HCT116 (cell line): ENCODE measurements at regions of chr12 and their contacts with region 1.

Region 1: GRCh38 chr12:69900720-69901131 is 75.7 kb downstream of the MYRFL start:
- DNase-seq: peak; percentile 45
- ATAC-seq: peak; percentile 86
- H3K4me3 ChIP-seq: no peak overlapping the region
- H3K27ac ChIP-seq: no peak overlapping the region
- H3K4me1 ChIP-seq: no peaks in the 10 kb centered on the region
- H3K27me3 ChIP-seq: no peaks in the 10 kb centered on the region
- CTCF ChIP-seq: peak; percentile 67 to 89 (median 81)
- POLR2A ChIP-seq: no peak
- RAD21 ChIP-seq: peak; percentile 97

Region 2: GRCh38 chr12:69179786-69180185 is 720.9 kb before region 1 on chr12:
- CTCF ChIA-PET with region 1: no interaction called
- POLR2A ChIA-PET with region 1: no interaction called
- RAD21 ChIA-PET with region 1: no interaction called
- intact Hi-C with region 1: no loop called
- DNase-seq: no peak
- ATAC-seq: no peak
- H3K4me3 ChIP-seq: no peak overlapping the region
- H3K27ac ChIP-seq: no peak overlapping the region
- H3K4me1 ChIP-seq: no peaks in the 10 kb centered on the region
- H3K27me3 ChIP-seq: no peaks in the 10 kb centered on the region
- CTCF ChIP-seq: no peak
- POLR2A ChIP-seq: no peak
- RAD21 ChIP-seq: no peak

Region 3: DNA sequence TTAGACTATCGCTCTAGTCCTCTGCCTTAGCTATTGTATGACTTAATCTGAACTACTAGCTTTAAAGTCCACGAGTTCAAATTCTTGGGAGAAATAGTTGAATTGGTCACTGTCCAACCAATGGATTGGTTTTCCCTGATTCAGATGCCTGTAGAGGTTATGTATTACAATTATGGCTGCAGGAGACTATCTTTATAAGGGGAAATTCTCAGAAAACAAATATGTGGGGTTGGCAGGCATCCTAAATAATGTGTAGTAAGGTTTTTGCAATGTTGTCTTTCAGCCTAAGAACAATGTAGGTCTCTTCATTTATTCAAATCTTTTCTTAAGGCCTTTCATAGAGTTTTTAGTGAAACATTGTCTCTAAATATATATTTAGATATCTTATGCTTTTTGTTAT is 48.8 kb before region 1 on chr12:
- CTCF ChIA-PET with region 1: no interaction called
- POLR2A ChIA-PET with region 1: no interaction called
- RAD21 ChIA-PET with region 1: no interaction called
- intact Hi-C with region 1: no loop called
- DNase-seq: no peak
- ATAC-seq: no peak
- H3K4me3 ChIP-seq: no peak overlapping the region
- H3K27ac ChIP-seq: no peak overlapping the region
- H3K4me1 ChIP-seq: no peaks in the 10 kb centered on the region
- H3K27me3 ChIP-seq: no peaks in the 10 kb centered on the region
- CTCF ChIP-seq: no peak
- POLR2A ChIP-seq: no peak
- RAD21 ChIP-seq: no peak

Region 4: DNA sequence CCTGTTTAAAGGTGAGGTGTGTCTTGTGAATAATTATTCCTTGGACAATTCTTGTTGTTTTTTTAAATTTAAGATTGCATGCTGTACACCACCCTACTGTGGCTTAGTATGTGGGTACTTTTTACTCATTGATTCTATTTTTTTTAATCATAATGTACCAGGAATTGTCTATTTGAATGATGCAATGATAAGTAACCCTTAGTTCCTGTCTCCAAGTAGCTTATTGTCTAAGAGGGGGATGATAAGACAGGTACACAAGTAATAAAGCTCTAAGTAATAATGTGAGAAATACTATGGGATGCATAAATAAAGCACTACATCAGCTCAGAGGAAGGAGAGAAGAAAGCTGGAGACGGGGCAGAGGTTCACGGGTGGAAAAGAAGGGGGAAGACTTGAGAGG is 15.2 kb after region 1 on chr12:
- CTCF ChIA-PET with region 1: no interaction called
- POLR2A ChIA-PET with region 1: no interaction called
- RAD21 ChIA-PET with region 1: no interaction called
- intact Hi-C with region 1: loop called (anchors 1 kb)
- DNase-seq: no peak
- ATAC-seq: no peak
- H3K4me3 ChIP-seq: no peak overlapping the region
- H3K27ac ChIP-seq: no peak overlapping the region
- H3K4me1 ChIP-seq: no peaks in the 10 kb centered on the region
- H3K27me3 ChIP-seq: no peaks in the 10 kb centered on the region
- CTCF ChIP-seq: no peak
- POLR2A ChIP-seq: no peak
- RAD21 ChIP-seq: no peak

Region 5: DNA sequence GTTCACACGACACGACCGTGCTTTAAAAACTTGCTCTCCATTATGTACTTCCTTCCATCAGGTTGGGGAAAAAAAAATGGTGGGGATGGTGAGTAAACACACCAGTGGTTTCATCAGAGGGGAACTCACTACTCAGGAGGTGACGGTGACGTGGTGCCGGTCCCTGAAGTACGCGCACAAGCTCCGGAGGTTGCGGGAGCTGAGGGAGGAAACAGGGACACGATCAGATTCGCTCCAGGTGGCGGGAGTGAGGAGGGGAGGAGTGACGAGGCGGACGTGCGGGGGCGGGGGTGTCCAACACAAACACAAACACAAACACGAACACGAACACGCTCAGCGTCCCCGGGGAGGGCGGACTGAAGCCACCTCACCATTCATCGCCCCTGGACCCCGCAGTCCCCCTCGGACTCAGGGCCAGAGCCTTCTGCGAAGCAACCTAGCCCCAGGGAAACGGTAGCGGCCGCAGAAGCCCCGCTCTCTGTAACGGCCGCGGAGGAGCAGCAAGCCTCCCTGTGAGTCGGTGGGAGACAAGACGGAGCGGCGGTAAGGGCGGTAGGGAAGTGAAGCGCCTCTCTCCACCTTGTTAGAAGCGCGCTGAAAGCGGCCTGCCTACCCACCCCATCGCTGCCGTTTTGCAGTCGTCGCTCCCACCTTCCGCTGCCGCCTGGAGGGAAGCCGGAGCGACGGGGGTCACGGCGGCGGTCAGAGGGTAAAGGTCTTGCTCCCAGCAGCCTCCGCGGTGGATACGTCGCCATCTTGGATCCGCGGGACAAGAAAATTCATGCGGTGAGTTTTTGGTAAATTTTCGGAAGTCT is 342.2 kb after region 1 on chr12 and contains the start of gene CNOT2:
- CTCF ChIA-PET with region 1: no interaction called
- POLR2A ChIA-PET with region 1: no interaction called
- RAD21 ChIA-PET with region 1: no interaction called
- intact Hi-C with region 1: loop called (anchors 1 kb)
- DNase-seq: peak; percentile 86
- ATAC-seq: peak; percentile 84
- H3K4me3 ChIP-seq: peak within 1 kb of the TSS; percentile 78 to 81
- H3K27ac ChIP-seq: peak within 1 kb of the TSS; percentile 96
- H3K4me1 ChIP-seq: peaks cover 3 to 16% of the 10 kb centered on the region in 2 experiments; a peak in 3 of 4 replicates
- H3K27me3 ChIP-seq: no peaks in the 10 kb centered on the region
- CTCF ChIP-seq: no peak
- POLR2A ChIP-seq: peak; percentile 39
- RAD21 ChIP-seq: no peak
- total RNA-seq, gene CNOT2: 58.7 TPM

Region 6: DNA sequence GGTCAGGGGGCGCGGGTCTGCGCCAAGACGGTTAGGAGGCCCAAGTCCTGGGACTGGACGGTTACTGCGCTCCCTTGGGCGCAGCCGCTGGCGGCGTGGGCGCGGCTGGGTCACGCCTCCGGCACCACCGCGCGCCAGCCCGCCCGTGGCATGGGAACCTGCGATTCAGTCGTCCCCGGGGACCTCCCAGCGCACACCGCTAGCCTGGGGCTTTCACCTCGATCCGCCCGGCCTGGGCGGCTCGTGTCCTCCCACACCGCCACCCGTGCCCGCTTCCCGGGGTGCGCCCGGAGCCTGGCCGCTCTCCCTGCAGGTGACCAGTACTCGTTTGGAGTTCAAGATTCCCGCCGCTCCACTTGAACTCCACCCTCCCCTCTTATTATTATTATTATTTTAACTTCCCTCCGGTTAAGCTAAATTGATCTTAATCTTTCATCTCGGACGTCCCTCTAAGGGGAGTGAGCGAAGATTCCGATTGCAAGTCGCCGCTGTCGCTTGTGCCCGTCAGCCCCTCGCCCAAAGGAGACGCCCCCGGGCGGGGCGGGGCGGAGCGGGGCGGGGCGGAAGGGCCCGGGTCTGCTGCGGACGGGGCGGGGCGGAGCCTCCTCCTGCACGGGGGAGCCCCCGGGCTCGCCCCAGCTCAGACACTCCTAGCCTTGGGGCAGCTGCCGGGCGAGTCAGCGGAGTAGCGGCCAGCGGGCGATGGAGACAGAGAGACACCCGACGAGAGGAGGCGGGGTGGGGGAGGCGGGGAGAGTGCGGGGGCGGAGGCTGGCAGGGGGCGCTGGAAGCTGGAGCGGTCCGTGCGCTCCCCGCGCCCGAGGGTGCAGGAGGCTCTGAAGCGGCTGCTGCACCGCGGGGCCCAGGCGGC is 465.2 kb after region 1 on chr12 and contains the start of gene KCNMB4:
- CTCF ChIA-PET with region 1: no interaction called
- POLR2A ChIA-PET with region 1: no interaction called
- RAD21 ChIA-PET with region 1: no interaction called
- intact Hi-C with region 1: loop called (anchors 10 kb)
- DNase-seq: no peak
- ATAC-seq: peak; percentile 76
- H3K4me3 ChIP-seq: peak within 1 kb of the TSS; percentile 61 to 76
- H3K27ac ChIP-seq: peak within 1 kb of the TSS; percentile 76
- H3K4me1 ChIP-seq: peaks cover 0 to 17% of the 10 kb centered on the region in 2 experiments; a peak in 3 of 4 replicates
- H3K27me3 ChIP-seq: no peaks in the 10 kb centered on the region
- CTCF ChIP-seq: no peak
- POLR2A ChIP-seq: peak; percentile 6
- RAD21 ChIP-seq: no peak
- total RNA-seq, gene KCNMB4: 5.0 TPM

Region 7: GRCh38 chr12:70576346-70577282 is 675.9 kb after region 1 on chr12:
- CTCF ChIA-PET with region 1: interaction called, 33 read pairs
- POLR2A ChIA-PET with region 1: no interaction called
- RAD21 ChIA-PET with region 1: interaction called, 4 to 5 read pairs
- intact Hi-C with region 1: loop called (anchors 1 kb)
- DNase-seq: peak; percentile 66
- ATAC-seq: peak; percentile 90
- H3K4me3 ChIP-seq: no peak overlapping the region
- H3K27ac ChIP-seq: no peak overlapping the region
- H3K4me1 ChIP-seq: no peaks in the 10 kb centered on the region
- H3K27me3 ChIP-seq: no peaks in the 10 kb centered on the region
- CTCF ChIP-seq: peak; percentile 65 to 91 (median 87)
- POLR2A ChIP-seq: no peak
- RAD21 ChIP-seq: peak; percentile 97

Region 8: GRCh38 chr12:70598467-70599193 is 697.9 kb after region 1 on chr12:
- CTCF ChIA-PET with region 1: no interaction called
- POLR2A ChIA-PET with region 1: no interaction called
- RAD21 ChIA-PET with region 1: no interaction called
- intact Hi-C with region 1: no loop called
- DNase-seq: no peak
- ATAC-seq: no peak
- H3K4me3 ChIP-seq: no peak overlapping the region
- H3K27ac ChIP-seq: no peak overlapping the region
- H3K4me1 ChIP-seq: 0 out of 4 replicates have a peak, but pooled peaks cover 0 to 5% of the 10 kb centered on the region in 2 experiments
- H3K27me3 ChIP-seq: no peaks in the 10 kb centered on the region
- CTCF ChIP-seq: no peak
- POLR2A ChIP-seq: no peak
- RAD21 ChIP-seq: no peak